ENCODE measurements at regions of chr4 and their contacts with region 1.

Region 1: DNA sequence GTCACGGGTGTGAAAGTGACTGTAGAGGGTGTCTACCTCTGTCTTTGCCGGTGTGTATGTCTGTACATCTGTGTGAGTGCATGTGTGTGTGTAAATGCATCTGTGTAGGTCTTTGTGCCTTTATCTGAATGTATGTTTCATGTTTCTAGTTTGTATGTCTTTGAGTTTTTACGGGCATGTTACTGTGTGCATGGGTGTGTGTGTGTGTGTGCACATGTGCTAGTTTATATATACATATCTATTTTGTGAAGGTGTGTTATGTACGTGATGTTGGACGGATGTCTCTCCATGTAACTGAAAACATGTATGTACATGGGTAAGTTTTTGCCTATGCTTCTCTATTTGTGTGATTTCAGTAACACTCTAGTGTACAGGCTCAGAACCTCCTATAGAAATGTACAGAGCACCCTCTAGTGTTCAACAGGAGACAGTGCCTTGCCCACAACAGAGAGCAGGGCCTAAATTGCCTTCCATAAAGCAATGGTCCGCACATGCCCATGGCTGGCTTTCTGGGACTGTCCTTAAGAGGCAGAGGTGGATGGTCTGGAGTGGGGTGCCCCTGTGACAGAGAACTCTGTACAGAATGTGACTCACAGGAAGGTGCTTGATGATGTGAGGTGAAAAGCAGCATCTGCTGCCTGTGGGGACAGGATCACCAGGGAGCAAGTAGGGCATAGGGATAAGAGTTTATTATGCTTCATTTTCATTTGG is 343.5 kb downstream of the RAPGEF2 start:
- DNase-seq: peak; percentile 73
- ATAC-seq: peak; percentile 96

Region 2: DNA sequence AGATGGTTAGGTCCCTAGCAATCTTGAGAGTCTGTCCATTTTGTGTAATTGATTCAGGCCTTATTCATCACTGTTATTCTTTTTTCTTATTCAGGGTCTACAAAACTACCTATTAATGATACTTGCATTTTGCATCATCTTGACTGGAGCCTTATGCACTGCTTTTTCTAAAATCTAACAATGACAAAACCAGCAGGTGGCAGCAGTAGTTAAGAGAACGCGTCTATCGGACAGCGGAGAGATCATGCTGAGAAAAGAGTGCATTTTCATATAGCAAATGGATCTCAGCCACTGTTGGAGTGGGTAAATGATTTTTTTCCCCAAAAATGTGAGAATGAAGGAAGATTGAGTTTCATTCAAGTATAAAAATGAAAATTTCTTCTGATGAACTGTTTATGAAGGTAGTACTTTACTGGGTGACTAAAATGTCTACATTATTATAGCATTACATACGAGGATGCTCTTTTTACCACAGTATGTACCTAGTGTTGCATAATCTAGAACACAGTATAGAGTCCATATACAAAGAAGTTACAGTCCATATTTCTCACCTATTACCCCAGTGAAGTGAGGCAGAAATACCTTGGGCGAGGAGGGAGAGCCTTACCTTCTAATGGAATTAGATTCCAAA is 1193.0 kb before region 1 on chr4:
- intact Hi-C with region 1: loop called (anchors 5 kb)
- DNase-seq: no peak
- ATAC-seq: peak; percentile 64

Region 3: DNA sequence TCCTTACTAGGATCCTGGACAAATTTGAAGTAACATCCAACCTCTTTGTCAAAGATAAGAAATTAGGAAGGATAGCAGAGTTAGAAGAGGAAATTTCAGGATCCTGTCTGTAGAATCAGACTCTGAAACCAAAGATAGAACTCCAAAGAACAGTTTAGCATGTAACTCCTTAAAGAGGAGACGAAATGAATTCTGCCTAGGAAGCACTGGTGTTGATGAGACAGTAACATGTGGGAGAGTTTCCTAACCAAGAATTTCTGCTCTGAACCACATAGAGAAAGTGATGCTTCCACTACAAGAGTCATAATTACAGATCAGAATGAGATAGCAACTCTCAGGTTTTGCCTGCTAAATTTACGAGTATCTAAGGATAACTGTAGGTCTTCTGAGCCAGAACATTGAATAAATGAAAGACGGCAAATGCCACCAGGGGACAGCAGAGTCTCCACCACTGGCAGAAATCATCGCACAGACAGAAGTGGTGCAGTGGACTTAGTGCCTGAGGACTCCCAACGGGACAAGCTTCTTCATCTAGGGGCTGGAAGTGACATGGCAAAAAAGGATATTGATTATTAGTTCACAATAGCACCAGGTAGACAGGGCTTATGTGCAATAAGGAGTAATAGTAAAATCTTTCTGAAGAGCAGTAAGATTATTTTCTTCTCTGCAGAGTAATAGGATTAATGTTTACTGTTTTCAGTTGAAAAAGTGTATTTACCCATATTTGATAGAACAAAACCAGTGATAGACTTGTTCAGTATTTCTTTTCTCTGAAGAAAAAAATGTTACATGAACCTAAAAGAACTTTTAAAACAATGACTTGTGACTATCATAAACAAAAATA is 716.5 kb before region 1 on chr4:
- intact Hi-C with region 1: loop called (anchors 5 kb)
- DNase-seq: no peak
- ATAC-seq: peak; percentile 93

Region 4: DNA sequence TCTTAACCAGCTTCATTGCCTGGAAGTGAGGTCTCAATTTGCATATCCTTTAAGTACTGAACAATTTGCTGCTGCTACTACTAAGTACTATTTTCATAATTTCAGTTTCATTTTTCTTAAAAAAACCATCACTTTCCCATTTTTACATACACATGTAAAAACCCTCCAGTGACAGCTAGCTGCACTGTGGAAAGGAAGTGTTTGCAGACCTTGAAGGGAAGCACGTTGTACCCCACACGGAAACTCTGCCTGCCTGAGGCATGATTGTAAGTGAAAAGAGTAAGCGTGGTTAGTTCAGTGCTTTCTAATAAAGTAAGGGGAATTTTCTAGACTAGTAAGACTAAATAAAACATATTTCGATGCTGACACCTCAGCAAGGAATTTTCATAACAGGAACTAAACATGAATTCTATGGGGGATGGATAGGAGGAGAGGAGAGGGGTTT is 240.0 kb before region 1 on chr4:
- intact Hi-C with region 1: loop called (anchors 2 kb)
- DNase-seq: no peak
- ATAC-seq: no peak

Region 5: GRCh38 chr4:159352609-159353008 is 93.8 kb before region 1 on chr4:
- intact Hi-C with region 1: loop called (anchors 5 kb)
- DNase-seq: no peak
- ATAC-seq: peak; percentile 24

Region 6: DNA sequence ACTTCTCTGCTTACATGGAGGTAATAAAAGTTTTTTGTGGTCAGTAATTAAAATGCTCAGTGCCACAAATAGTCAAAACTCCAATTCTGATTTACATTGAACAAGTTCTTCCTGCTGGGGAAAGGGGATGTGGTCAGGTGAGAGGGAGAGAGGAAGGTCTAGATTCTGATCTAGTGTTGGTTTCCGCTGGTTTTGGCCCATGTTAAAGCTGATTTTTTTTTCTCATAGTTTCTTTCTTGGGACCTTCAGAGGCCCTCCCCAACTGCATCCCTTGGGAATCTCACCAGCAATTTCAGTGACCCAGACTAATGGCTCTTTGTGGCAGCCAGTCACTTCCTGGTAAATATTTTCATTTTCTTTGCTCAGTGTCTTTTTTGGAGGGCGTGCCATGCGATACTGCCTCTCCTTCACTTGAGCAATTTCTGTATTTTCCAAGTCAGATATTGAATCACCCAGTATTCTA is 10.8 kb before region 1 on chr4:
- intact Hi-C with region 1: no loop called
- DNase-seq: no peak
- ATAC-seq: no peak

Region 7: GRCh38 chr4:159483782-159484767 is 37.7 kb after region 1 on chr4:
- intact Hi-C with region 1: no loop called
- DNase-seq: no peak
- ATAC-seq: no peak